ENCODE measurements at regions of chr14 and their contacts with region 1.

Region 1: GRCh38 chr14:20343092-20343861 is at the start of gene PARP2:
- DNase-seq: peak; percentile 95 to 98
- ATAC-seq: peak; percentile 91
- total RNA-seq, gene PARP2: 10.0 to 10.7 TPM

Region 2: DNA sequence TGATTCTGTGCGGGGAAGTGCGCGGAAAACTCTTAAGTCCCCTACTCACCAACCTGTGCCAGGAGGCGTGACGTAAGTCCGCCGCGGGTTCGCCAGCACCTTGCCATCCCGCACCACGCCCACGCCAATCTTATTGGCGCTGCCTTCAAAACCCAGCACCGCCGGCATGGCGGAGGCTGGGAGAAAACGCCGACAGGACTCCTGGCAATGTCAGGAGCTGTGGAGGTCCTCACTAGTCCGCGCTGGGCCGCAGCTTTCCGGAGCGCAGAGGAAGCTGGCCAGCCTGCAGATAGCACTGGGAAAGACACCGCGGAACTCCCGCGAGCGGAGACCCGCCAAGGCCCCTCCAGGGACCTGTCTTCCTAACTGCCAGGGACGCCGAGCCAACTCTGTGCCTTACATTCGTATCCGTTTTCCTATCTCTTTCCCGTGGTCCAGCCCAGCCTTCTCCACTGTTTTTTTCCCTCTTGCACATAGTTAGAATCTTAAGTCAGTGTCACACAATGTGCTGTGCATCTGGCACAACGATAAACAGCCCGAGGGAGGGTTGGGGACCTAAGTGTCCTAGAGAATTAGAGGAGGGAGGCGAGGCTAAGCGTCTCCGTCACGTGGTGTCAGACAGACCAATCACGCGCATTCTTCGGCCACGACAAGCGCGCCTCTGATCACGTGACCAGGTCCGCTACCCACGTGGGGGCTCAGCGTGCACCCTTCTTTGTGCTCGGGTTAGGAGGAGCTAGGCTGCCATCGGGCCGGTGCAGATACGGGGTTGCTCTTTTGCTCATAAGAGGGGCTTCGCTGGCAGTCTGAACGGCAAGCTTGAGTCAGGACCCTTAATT is 111.5 kb after region 1 on chr14 and contains the starts of genes APEX1 and OSGEP:
- intact Hi-C with region 1: loop called in 1 of 2 experiments (anchors 10 kb)
- DNase-seq: peak; percentile 98 to 99
- ATAC-seq: peak; percentile 86
- total RNA-seq, gene APEX1: 80.5 to 93.9 TPM
- total RNA-seq, gene OSGEP: 31.2 to 35.0 TPM

Region 3: DNA sequence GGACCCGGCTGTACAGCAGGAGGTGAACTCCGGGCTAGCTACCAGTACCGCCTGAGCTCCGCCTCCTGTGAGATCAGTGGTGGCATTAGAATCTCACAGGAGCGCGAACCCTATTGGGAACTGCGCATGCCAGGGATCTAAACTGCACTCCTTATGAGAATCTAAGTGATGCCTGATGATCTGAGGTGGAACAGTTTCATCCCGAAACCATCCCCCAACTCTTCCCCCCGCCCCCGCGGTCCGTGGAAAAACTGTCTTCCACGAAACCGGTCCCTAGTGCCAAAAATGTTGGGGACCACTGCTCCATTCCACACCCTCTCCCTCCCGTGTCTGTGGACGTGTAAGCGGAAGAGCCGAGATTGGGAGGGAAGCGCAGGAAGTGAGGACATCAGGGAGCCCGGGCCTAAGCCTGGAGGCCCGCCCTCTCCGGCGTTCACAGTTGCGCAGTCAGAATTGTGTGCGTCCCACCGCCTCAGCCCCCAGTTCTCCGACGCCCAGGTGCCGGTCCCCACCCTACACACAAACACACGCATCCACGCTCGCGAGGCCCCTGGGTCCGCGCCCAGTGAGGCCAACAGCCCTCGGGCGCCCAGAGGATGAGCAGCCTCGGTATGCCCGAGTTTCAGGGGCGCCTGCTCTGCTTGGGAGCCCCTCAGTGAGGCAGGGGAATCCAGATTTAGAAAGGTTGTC is 339.3 kb after region 1 on chr14:
- intact Hi-C with region 1: loop called in 1 of 2 experiments (anchors 5 kb)
- DNase-seq: peak; percentile 88 to 91
- ATAC-seq: peak; percentile 54